ENCODE measurements at regions of chr12 and their contacts with region 1.

Region 1: GRCh38 chr12:46933947-46934346 is 108.2 kb upstream of the SLC38A4 start:
- DNase-seq: no peak
- H3K4me3 ChIP-seq: no peak overlapping the region
- CTCF ChIP-seq: peak; percentile 56

Region 2: DNA sequence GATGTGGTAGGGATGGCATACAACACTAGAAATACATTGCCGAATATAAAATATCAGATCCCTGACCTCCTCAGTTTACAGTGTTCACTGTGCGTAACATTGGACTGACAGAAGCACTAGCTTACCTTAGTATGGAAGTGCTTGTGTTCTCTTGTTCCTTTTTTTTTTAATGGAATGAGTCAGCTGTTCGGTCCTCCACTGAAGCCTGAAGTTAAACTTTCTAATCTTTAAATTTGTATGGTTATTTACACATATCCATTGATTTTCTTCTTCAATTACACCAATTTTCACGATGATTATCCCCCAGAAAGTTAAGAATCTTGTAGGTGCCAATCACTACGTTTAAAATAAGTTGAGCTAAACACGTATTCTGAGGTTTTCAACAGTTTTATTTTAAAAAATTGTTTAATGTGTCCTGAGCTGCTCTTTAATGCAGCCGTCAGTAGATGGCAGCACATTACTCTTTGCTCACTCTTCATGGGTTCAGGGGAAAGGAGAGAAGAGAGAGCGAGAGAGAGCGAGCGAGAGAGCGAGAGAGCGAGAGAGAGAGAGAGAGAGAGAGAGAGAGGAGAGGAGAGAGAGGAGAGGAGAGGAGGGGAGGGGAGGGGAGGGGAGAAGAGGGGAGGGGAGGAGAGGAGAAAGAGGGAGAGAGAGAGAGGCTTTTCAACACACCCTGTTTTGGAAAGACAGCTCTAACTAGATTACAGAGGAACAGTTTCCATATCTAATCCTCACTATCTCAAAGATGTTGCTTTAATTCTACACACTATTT is 808.9 kb before region 1 on chr12:
- CTCF ChIA-PET with region 1: interaction called, 19 read pairs
- POLR2A ChIA-PET with region 1: no interaction called
- DNase-seq: peak; percentile 53
- H3K4me3 ChIP-seq: no peak overlapping the region
- CTCF ChIP-seq: peak; percentile 63

Region 3: GRCh38 chr12:46675736-46676135 is 258.2 kb before region 1 on chr12:
- CTCF ChIA-PET with region 1: interaction called, 159 read pairs
- POLR2A ChIA-PET with region 1: no interaction called
- DNase-seq: no peak
- H3K4me3 ChIP-seq: no peak overlapping the region
- CTCF ChIP-seq: peak; percentile 1

Region 4: GRCh38 chr12:46777587-46777986 is 156.4 kb before region 1 on chr12:
- CTCF ChIA-PET with region 1: no interaction called
- POLR2A ChIA-PET with region 1: no interaction called
- DNase-seq: no peak
- H3K4me3 ChIP-seq: no peak overlapping the region
- CTCF ChIP-seq: no peak

Region 5: GRCh38 chr12:46895726-46896125 is 38.2 kb before region 1 on chr12:
- CTCF ChIA-PET with region 1: no interaction called
- POLR2A ChIA-PET with region 1: no interaction called
- DNase-seq: no peak
- H3K4me3 ChIP-seq: no peak overlapping the region
- CTCF ChIP-seq: no peak

Region 6: GRCh38 chr12:46921764-46922133 is 12.2 kb before region 1 on chr12:
- CTCF ChIA-PET with region 1: interaction called, 33 read pairs
- POLR2A ChIA-PET with region 1: no interaction called
- DNase-seq: no peak
- H3K4me3 ChIP-seq: no peak overlapping the region
- CTCF ChIP-seq: no peak

Region 7: GRCh38 chr12:46952880-46953517 is 19.1 kb after region 1 on chr12:
- CTCF ChIA-PET with region 1: interaction called, 26 read pairs
- POLR2A ChIA-PET with region 1: no interaction called
- DNase-seq: no peak
- H3K4me3 ChIP-seq: no peak overlapping the region
- CTCF ChIP-seq: no peak

Region 8: DNA sequence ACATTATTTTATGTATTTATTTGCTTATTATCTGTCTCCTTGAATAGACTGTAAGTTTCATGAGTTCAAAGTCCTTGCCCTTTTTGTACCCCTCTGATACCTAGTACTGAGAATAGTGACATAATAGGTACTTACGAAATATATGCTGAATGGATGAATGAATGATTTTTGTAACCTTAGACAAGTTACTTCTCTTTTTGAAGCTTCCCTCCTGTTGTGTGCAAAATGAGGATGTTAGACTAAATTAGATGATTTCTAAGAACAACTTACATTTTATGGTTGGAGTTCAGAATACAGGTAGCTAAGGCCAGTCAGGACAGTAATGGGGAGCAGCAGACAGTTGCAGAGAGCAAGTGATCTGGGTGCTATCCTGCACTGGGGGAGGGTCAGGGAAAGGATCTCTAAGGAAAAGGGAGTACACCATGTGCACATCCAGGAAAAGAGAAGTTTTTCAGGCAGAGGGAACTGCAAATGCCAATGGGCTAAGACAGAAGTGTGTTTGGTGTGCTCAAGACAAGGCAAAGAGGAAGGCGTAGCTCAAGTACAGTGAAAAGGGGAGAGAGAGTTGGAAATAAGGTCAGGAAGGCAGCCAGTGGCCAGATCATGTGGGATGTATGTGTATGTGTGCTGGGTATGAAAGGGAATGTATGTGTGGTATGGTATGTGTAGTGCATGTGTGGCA is 205.2 kb after region 1 on chr12:
- CTCF ChIA-PET with region 1: no interaction called
- POLR2A ChIA-PET with region 1: no interaction called
- DNase-seq: no peak
- H3K4me3 ChIP-seq: no peak overlapping the region
- CTCF ChIP-seq: no peak

Measured in AG04449 (cell line).